ENCODE measurements at regions of chr4 and their contacts with region 1.

Region 1: DNA sequence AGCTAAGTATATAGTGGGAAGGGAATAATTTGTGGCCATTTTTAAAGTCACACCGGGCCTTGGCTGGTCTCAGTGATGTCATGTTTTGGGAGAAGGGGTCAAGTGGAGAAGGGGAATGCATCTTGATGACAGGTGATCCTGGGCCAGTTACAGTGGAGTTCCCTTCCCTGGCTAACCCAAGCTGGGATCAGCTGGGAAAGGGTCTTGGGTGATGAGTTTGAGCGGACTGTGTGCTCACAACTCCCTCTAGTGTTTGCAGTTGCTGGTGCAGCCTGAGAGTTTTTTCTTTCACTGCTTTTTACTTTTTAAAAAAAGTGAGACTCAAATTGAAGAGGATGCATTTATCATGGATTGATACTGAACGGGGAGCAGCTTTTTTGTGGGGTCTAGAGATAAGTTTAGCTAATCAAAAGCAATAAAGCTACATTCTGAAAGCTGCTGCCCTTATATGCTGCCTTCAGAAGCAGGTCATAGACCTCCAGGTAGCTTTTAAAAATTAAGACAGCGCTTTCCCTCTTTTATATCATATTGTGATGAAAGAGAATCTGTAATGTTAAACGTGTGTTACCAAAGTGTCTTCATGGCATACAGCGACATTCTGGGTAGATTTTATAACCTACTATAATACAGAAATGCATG is 164.7 kb downstream of the DCLK2 start:
- DNase-seq: peak in 1 of 2 experiments; percentile 34
- H3K4me3 ChIP-seq: no peak overlapping the region
- H3K27ac ChIP-seq: no peak overlapping the region
- H3K4me1 ChIP-seq: no peaks in the 10 kb centered on the region
- H3K27me3 ChIP-seq: no peaks in the 10 kb centered on the region
- CTCF ChIP-seq: peak; percentile 82

Region 2: DNA sequence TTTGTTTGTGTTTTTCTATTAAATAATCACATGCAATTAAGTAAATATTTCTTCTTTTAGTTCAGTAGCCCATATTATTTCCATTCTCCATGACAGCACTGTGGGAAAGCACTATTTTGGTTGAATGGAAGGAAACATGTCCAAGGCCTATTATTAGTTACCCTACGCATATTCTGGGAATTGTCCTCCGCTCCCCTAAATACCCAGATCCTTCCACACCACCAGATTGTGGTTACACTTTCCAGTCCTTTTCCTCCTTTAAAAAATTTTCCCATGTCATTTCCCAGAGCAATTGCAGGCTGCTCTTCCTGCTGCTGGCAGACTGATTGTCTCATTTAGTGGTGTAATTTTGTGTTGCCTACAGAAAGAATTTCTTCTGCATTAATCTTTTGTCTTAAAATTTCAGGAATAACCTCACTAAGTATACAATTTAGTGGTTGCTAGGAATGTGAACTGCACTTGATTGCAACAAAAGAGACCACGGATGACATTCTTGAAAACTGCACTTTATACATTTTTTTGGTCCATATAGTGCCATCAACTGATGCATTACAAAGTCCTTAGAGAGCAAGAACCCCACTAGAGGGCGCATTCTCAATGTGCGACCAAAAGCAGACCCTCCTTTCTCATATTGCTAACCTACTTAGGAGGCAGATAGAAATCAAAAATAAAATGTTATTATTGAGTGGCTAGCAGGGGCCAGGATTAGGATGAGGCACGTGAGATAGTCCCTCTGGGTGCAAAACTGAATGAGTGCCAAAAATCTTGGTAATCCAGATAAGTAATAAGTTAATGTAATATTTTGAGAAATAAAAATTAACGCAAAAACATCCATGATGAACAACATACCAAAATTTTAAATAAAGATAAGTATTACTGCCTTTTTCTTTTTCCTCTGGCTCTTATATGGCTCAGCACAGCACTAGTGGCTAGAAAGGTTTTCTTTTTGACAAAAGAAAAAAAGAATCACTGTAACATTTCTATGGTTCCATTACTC is 328.5 kb before region 1 on chr4:
- CTCF ChIA-PET with region 1: no interaction called
- POLR2A ChIA-PET with region 1: no interaction called
- intact Hi-C with region 1: loop called (anchors 10 kb)
- DNase-seq: peak in 1 of 2 experiments; percentile 37
- H3K4me3 ChIP-seq: no peak overlapping the region
- H3K27ac ChIP-seq: no peak overlapping the region
- H3K4me1 ChIP-seq: no peaks in the 10 kb centered on the region
- H3K27me3 ChIP-seq: no peaks in the 10 kb centered on the region
- CTCF ChIP-seq: peak; percentile 78

Region 3: DNA sequence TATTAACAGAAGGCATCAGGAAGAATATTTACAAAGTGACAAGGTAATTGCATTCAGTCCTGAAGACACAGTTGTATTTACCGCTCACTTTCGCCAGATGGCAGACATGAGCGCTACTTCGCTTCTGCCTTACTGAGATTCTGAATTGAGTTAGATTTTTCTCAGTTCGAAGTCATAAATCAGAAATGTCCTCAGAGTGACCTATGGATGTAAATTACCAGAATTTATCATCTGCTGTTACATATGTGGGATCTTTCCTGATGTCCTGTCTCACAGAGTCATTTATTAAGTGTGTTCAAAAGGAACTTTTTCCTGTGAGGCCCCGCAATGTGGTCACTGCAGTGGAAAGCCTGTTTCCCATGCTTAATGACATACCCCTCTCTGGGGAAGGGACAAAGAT is 262.0 kb before region 1 on chr4:
- CTCF ChIA-PET with region 1: no interaction called
- POLR2A ChIA-PET with region 1: no interaction called
- intact Hi-C with region 1: loop called (anchors 1 kb)
- DNase-seq: peak; percentile 40 to 41
- H3K4me3 ChIP-seq: no peak overlapping the region
- H3K27ac ChIP-seq: no peak overlapping the region
- H3K4me1 ChIP-seq: no peaks in the 10 kb centered on the region
- H3K27me3 ChIP-seq: no peaks in the 10 kb centered on the region
- CTCF ChIP-seq: peak; percentile 66

Region 4: GRCh38 chr4:149999485-150000074 is 243.4 kb before region 1 on chr4:
- CTCF ChIA-PET with region 1: interaction called, 3 read pairs
- POLR2A ChIA-PET with region 1: interaction called, 4 read pairs
- intact Hi-C with region 1: loop called (anchors 2 kb)
- DNase-seq: no peak
- H3K4me3 ChIP-seq: no peak overlapping the region
- H3K27ac ChIP-seq: no peak overlapping the region
- H3K4me1 ChIP-seq: peaks cover 8% of the 10 kb centered on the region; the same call in 1 of the 2 replicates
- H3K27me3 ChIP-seq: no peaks in the 10 kb centered on the region
- CTCF ChIP-seq: peak; percentile 68

Region 5: DNA sequence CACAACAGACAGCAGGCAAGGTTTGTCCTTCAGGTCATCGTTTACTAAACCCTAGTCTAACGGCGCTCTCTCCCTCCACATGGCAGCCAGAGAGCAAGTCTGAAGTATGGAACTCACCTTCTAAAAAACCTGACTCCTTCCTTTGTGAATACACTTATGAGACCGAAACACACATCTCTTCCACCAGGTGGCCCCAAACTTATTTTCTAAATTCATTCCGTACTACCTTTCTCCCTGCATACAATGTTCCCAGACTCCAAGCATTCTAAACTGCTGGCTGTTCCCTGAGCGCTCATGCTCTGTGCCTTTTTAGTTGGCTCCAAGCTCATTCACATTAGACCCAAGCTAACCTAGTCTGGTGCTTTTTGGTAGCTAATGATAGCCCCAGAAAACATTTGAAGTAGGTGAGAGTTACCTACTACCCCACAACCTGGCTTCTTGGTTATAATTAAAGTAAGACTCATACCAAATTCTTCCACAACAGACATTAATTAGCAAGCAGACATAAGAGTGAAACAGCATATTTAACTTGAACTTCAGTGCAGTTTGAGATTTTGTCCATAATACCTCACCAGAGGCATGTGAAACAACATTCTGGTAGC is 232.3 kb before region 1 on chr4:
- CTCF ChIA-PET with region 1: interaction called, 3 read pairs
- POLR2A ChIA-PET with region 1: no interaction called
- intact Hi-C with region 1: loop called (anchors 1 kb)
- DNase-seq: peak in 1 of 2 experiments; percentile 20
- H3K4me3 ChIP-seq: no peak overlapping the region
- H3K27ac ChIP-seq: no peak overlapping the region
- H3K4me1 ChIP-seq: no peaks in the 10 kb centered on the region
- H3K27me3 ChIP-seq: no peaks in the 10 kb centered on the region
- CTCF ChIP-seq: peak; percentile 60

Region 6: GRCh38 chr4:150078637-150079581 is 164.0 kb before region 1 on chr4:
- CTCF ChIA-PET with region 1: no interaction called
- POLR2A ChIA-PET with region 1: no interaction called
- intact Hi-C with region 1: loop called (anchors 10 kb)
- DNase-seq: peak in 1 of 2 experiments; percentile 44
- H3K4me3 ChIP-seq: peak overlapping the region; percentile 57
- H3K27ac ChIP-seq: no peak overlapping the region
- H3K4me1 ChIP-seq: no peaks in the 10 kb centered on the region
- H3K27me3 ChIP-seq: 0 out of 2 replicates have a peak, but pooled peaks cover 10% of the 10 kb centered on the region
- CTCF ChIP-seq: no peak

Measured in PC-9 (cell line).